ENCODE measurements at regions of chrX and their contacts with region 1.

Region 1: GRCh38 chrX:102652031-102652688 is 877 bp downstream of the GPRASP1 start:
- DNase-seq: peak; percentile 66 to 83 (median 76)
- H3K4me3 ChIP-seq: peak overlapping the region; percentile 29 to 67
- H3K4me3 Mint-ChIP-seq: peak overlapping the region; percentile 86 to 100 (median 93)
- H3K27ac ChIP-seq: peak overlapping the region; percentile 53
- H3K27ac Mint-ChIP-seq: peak overlapping the region; percentile 87 to 98 (median 94)
- H3K4me1 ChIP-seq: peaks cover 9% of the 10 kb centered on the region
- H3K4me1 Mint-ChIP-seq: peaks cover 15 to 37% (median 21%) of the 10 kb centered on the region in 4 donors
- H3K27me3 ChIP-seq: no peaks in the 10 kb centered on the region
- H3K27me3 Mint-ChIP-seq: no peaks in the 10 kb centered on the region

Region 2: GRCh38 chrX:102155806-102156179 is 496.4 kb before region 1 on chrX and contains the start of gene BEX5:
- CTCF ChIA-PET with region 1: no interaction called
- POLR2A ChIA-PET with region 1: no interaction called
- intact Hi-C with region 1: loop called (anchors 1 kb)
- DNase-seq: peak; percentile 60 to 83 (median 65)
- H3K4me3 ChIP-seq: peak within 1 kb of the TSS; percentile 57 to 74
- H3K4me3 Mint-ChIP-seq: peak within 1 kb of the TSS; percentile 96 to 100 (median 98)
- H3K27ac ChIP-seq: peak within 1 kb of the TSS; percentile 77
- H3K27ac Mint-ChIP-seq: peak within 1 kb of the TSS; percentile 98 to 100 (median 99)
- H3K4me1 ChIP-seq: peaks cover 8% of the 10 kb centered on the region
- H3K4me1 Mint-ChIP-seq: peaks cover 0 to 14% (median 10%) of the 10 kb centered on the region in 4 donors
- H3K27me3 ChIP-seq: no peaks in the 10 kb centered on the region
- H3K27me3 Mint-ChIP-seq: no peaks in the 10 kb centered on the region
- total RNA-seq, gene BEX5: 5.9 to 7.4 TPM

Region 3: DNA sequence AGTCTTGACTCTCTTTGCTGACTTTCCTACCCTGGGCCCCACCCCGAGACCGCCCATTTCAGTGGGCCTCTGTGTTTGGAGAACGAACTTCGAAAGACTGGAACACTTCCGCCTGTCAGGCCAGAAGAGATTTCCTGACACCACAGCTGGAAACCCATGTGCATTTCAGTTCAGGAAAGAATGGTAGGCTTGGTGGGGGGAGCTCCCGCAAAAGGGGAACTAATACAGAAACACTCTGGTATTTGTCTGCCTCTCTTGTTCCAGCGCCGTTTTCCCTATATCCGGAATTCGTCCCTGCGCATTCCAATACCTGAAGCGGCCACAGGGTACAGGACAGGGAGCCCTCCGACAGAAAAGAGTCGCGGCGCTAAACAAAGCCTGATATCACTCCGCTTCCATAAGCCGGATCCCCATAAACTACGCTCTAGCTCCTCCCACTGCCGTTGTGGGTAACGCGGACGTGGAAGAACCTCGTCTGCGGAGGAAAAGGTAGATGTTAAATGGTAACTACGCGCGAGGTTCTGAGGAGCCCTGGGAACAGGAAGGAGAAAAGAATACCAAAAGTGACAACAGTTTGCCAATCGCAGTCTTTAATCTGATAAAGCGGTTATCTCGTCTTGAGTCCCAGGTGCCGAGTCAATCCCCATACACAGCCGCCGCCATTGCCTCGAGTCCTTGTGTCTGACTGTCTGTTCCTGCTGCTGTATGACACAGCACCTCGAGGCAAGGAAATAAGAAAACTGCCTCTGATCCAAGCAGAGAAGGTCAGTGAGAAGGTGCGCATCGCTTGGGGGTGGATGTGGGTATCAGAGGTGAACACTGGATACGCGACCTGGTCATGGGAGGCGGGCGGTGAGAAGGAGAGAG is 52.8 kb before region 1 on chrX and contains the start of gene ARMCX5:
- CTCF ChIA-PET with region 1: interaction called, 3 read pairs
- POLR2A ChIA-PET with region 1: interaction called, 17 read pairs
- intact Hi-C with region 1: loop called (anchors 1 kb)
- DNase-seq: peak; percentile 69 to 85 (median 79)
- H3K4me3 ChIP-seq: peak within 1 kb of the TSS; percentile 61 to 78
- H3K4me3 Mint-ChIP-seq: peak within 1 kb of the TSS; percentile 95 to 99 (median 97)
- H3K27ac ChIP-seq: peak within 1 kb of the TSS; percentile 67
- H3K27ac Mint-ChIP-seq: peak within 1 kb of the TSS; percentile 95 to 99 (median 98)
- H3K4me1 ChIP-seq: peaks cover 20% of the 10 kb centered on the region
- H3K4me1 Mint-ChIP-seq: peaks cover 20 to 53% (median 34%) of the 10 kb centered on the region in 4 donors
- H3K27me3 ChIP-seq: no peaks in the 10 kb centered on the region
- H3K27me3 Mint-ChIP-seq: no peaks in the 10 kb centered on the region
- total RNA-seq, gene ARMCX5: 10.1 to 12.2 TPM

Region 4: GRCh38 chrX:102637561-102637960 is 14.6 kb before region 1 on chrX:
- CTCF ChIA-PET with region 1: no interaction called
- POLR2A ChIA-PET with region 1: no interaction called
- intact Hi-C with region 1: no loop called
- DNase-seq: no peak
- H3K4me3 ChIP-seq: no peak overlapping the region
- H3K4me3 Mint-ChIP-seq: no peak overlapping the region
- H3K27ac ChIP-seq: no peak overlapping the region
- H3K27ac Mint-ChIP-seq: peak overlapping the region in 1 of 7 donors; percentile 14
- H3K4me1 ChIP-seq: no peaks in the 10 kb centered on the region
- H3K4me1 Mint-ChIP-seq: no peaks in the 10 kb centered on the region
- H3K27me3 ChIP-seq: no peaks in the 10 kb centered on the region
- H3K27me3 Mint-ChIP-seq: no peaks in the 10 kb centered on the region

Region 5: GRCh38 chrX:102712952-102713625 is 60.9 kb after region 1 on chrX:
- CTCF ChIA-PET with region 1: no interaction called
- POLR2A ChIA-PET with region 1: no interaction called
- intact Hi-C with region 1: loop called (anchors 2 kb)
- DNase-seq: peak in 1 of 5 donors; percentile 4
- H3K4me3 ChIP-seq: no peak overlapping the region
- H3K4me3 Mint-ChIP-seq: peak overlapping the region; percentile 78 to 88 (median 82)
- H3K27ac ChIP-seq: no peak overlapping the region
- H3K27ac Mint-ChIP-seq: peak overlapping the region in 4 of 7 donors; percentile 27 to 59 (median 43)
- H3K4me1 ChIP-seq: peaks cover 9% of the 10 kb centered on the region
- H3K4me1 Mint-ChIP-seq: peaks cover 13 to 23% (median 15%) of the 10 kb centered on the region in 4 donors
- H3K27me3 ChIP-seq: no peaks in the 10 kb centered on the region
- H3K27me3 Mint-ChIP-seq: peaks cover 10 to 16% of the 10 kb centered on the region in 2 donors

Region 6: GRCh38 chrX:102863735-102864134 is 211.6 kb after region 1 on chrX:
- CTCF ChIA-PET with region 1: no interaction called
- POLR2A ChIA-PET with region 1: interaction called, 3 read pairs
- intact Hi-C with region 1: loop called (anchors 5 kb)
- DNase-seq: peak; percentile 74 to 79 (median 75)
- H3K4me3 ChIP-seq: no peak overlapping the region
- H3K4me3 Mint-ChIP-seq: no peak overlapping the region
- H3K27ac ChIP-seq: no peak overlapping the region
- H3K27ac Mint-ChIP-seq: no peak overlapping the region
- H3K4me1 ChIP-seq: no peaks in the 10 kb centered on the region
- H3K4me1 Mint-ChIP-seq: no peaks in the 10 kb centered on the region
- H3K27me3 ChIP-seq: no peaks in the 10 kb centered on the region
- H3K27me3 Mint-ChIP-seq: no peaks in the 10 kb centered on the region

Measured in CD4-positive, alpha-beta memory T cell (primary cell).